PC-3 (cell line): ENCODE measurements at regions of chr17 and their contacts with region 1.

Region 1: GRCh38 chr17:18225121-18225566 is 291 bp upstream of the LLGL1 start:
- DNase-seq: peak; percentile 97
- ATAC-seq: peak; percentile 91
- H3K4me3 ChIP-seq: peak overlapping the region; percentile 49; the same call in 1 of the 2 replicates
- H3K27ac ChIP-seq: no peak overlapping the region
- H3K4me1 ChIP-seq: peaks cover 20% of the 10 kb centered on the region
- H3K27me3 ChIP-seq: no peaks in the 10 kb centered on the region
- CTCF ChIP-seq: no peak

Region 2: DNA sequence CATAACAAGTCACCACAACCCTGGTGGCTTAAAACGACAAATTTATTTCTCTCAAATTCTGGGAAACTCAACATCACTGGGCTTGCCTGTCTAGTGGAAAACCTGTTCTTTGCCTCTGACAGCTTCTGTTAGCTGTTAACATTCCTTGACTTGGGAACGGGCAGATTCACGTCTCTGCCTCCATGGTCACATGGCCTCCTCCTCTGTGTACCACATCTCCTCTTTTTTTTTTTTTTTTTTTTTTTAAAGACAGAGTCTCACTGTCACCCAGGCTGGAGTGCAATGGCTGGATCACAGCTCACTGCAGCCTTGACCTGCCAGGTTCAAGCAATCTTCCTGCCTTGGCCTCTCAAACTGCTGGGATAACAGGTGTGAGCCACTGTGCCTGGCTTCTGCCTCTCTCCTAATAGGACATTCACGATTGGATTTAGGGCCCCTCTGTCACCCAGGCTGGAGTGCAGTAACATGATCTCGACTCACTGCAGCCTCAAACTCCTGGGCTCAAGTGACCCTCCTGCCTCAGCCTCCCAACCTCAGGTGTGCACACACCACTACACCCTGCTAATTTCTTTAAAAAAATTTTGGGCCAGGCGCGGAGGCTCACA is 11.4 kb before region 1 on chr17:
- CTCF ChIA-PET with region 1: no interaction called
- POLR2A ChIA-PET with region 1: no interaction called
- intact Hi-C with region 1: no loop called
- DNase-seq: no peak
- ATAC-seq: no peak
- H3K4me3 ChIP-seq: no peak overlapping the region
- H3K27ac ChIP-seq: no peak overlapping the region
- H3K4me1 ChIP-seq: no peaks in the 10 kb centered on the region
- H3K27me3 ChIP-seq: no peaks in the 10 kb centered on the region
- CTCF ChIP-seq: no peak

Region 3: GRCh38 chr17:18309202-18309601 is 84.1 kb after region 1 on chr17:
- CTCF ChIA-PET with region 1: no interaction called
- POLR2A ChIA-PET with region 1: interaction called, 21 read pairs
- intact Hi-C with region 1: no loop called
- DNase-seq: no peak
- ATAC-seq: no peak
- H3K4me3 ChIP-seq: no peak overlapping the region
- H3K27ac ChIP-seq: no peak overlapping the region
- H3K4me1 ChIP-seq: peaks cover 16% of the 10 kb centered on the region; the same call in 1 of the 2 replicates
- H3K27me3 ChIP-seq: no peaks in the 10 kb centered on the region
- CTCF ChIP-seq: no peak